ENCODE measurements at regions of chr1 and their contacts with region 1.

Region 1: GRCh38 chr1:224851210-224851847 is 78.1 kb upstream of the DNAH14 start:
- DNase-seq: peak; percentile 55 to 78
- H3K4me3 ChIP-seq: no peak overlapping the region
- H3K27ac ChIP-seq: no peak overlapping the region
- H3K4me1 ChIP-seq: no peaks in the 10 kb centered on the region
- H3K27me3 ChIP-seq: no peaks in the 10 kb centered on the region
- CTCF ChIP-seq: peak; percentile 89

Region 2: DNA sequence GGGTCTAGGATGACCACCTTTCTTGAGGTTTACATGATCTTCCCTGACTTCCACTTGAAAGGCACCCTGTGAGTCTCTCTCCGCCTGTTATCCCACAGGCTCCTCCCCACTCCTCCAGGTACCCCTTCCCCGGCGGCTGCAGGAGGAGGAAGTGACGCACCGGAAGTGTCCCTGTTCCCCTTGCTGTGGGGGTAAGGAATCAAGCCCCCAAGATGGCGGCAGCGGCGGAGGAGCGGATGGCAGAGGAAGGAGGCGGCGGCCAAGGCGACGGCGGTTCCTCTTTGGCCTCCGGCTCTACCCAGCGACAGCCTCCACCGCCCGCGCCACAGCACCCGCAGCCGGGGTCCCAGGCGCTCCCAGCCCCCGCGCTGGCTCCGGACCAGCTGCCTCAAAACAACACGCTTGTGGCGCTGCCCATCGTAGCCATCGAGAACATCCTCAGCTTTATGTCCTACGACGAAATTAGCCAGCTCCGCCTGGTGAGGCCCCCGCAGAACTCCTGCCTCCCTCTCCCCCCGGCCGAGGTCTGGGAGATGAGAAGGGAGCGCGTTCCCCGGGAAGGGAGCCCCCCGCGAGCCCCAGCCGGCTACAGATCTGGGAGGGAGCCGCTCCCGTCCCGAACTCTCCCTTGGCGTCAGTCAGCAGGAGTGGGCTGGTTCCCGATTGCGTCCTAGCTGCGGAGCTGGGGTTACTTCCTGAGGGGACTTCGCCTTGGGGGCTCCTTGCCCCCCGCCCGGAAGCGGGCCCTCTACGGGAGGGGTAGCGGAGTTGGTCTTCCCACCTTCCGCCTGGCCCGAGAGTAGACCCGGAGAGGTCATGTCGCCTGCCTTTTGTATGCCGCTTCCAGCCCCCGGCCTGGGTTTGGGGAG is 737.2 kb before region 1 on chr1 and contains the start of gene FBXO28:
- CTCF ChIA-PET with region 1: no interaction called
- POLR2A ChIA-PET with region 1: no interaction called
- intact Hi-C with region 1: loop called (anchors 1 kb)
- DNase-seq: peak; percentile 86 to 93
- H3K4me3 ChIP-seq: peak within 1 kb of the TSS; percentile 81
- H3K27ac ChIP-seq: peak within 1 kb of the TSS; percentile 45
- H3K4me1 ChIP-seq: peaks cover 24% of the 10 kb centered on the region
- H3K27me3 ChIP-seq: no peaks in the 10 kb centered on the region
- CTCF ChIP-seq: no peak
- total RNA-seq, gene FBXO28: 43.4 and 48.1 TPM in 2 replicates

Region 3: DNA sequence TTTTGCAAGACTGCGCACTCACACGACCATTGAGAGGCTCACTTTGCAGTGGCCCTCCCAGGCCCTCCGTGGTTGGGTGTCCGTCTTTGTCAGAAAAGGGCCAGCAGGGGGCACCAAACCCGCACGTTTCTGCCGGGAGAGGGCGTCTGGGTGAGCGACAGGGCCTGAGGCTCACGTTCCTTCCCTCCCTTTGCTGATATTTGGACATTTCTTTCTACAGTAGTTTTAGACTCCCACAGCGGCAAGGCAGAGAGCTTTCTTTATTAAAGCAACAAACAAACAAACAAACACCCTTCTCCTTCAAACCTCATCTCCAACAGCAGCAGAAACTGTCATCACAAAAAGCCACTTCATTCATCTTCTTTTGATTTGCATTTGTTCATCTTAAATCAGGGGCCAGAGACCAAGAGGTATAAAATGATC is 337.5 kb before region 1 on chr1:
- CTCF ChIA-PET with region 1: interaction called, 6 read pairs
- POLR2A ChIA-PET with region 1: no interaction called
- intact Hi-C with region 1: loop called (anchors 1 kb)
- DNase-seq: peak; percentile 71 to 92
- H3K4me3 ChIP-seq: no peak overlapping the region
- H3K27ac ChIP-seq: no peak overlapping the region
- H3K4me1 ChIP-seq: peaks cover 37% of the 10 kb centered on the region
- H3K27me3 ChIP-seq: no peaks in the 10 kb centered on the region
- CTCF ChIP-seq: peak; percentile 94

Region 4: DNA sequence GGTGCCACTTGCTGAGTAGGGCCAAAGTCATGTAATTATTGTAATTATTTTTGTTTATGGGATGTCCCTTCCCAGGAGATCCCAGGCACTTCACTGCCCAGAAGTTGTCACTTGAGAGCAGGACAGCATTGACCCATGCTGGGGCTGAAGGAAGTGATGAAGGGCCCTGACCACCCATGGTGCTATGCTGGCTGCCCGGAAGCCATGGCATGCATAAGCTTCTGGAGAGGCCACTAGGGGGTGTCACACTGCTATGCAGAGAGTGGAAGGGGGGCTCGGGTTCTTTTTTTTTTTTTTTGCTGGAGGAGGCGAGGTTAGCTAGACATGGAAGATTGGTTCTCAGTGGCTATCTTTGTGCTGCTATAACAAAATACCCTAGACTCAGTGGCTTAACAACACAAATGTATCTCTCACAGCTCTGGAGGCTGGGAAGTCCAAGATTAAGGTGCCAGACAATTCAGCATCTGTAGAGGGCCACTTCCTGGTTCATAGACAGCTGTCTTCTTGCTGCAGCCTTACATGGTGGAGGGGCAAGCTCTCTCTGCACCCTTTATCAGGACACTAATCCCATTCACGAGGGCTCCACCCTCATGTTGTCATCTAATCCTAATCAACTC is 150.3 kb before region 1 on chr1:
- CTCF ChIA-PET with region 1: interaction called, 12 read pairs
- POLR2A ChIA-PET with region 1: no interaction called
- intact Hi-C with region 1: loop called (anchors 2 kb)
- DNase-seq: no peak
- H3K4me3 ChIP-seq: no peak overlapping the region
- H3K27ac ChIP-seq: no peak overlapping the region
- H3K4me1 ChIP-seq: no peaks in the 10 kb centered on the region
- H3K27me3 ChIP-seq: no peaks in the 10 kb centered on the region
- CTCF ChIP-seq: peak; percentile 58

Region 5: DNA sequence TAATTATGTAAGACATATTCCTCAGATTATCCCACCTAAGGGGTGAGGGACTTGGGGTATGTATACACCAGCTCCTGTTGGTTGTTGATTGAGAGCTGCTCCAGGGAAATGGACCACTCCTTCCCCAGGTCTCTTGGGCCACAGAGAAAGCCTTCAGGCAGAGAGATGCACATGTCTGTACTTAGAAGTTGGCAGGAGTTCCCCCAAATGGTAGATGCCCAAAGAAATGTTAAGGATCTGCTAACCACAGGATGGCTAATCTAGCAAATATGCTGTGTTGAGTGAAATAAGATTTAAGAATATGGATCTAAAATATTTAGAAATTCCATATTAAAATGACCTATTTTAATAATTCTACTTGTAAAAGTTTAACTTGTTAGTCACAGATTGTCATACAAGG is 22.6 kb before region 1 on chr1:
- CTCF ChIA-PET with region 1: no interaction called
- POLR2A ChIA-PET with region 1: no interaction called
- intact Hi-C with region 1: no loop called
- DNase-seq: no peak
- H3K4me3 ChIP-seq: no peak overlapping the region
- H3K27ac ChIP-seq: no peak overlapping the region
- H3K4me1 ChIP-seq: peaks cover 22% of the 10 kb centered on the region
- H3K27me3 ChIP-seq: no peaks in the 10 kb centered on the region
- CTCF ChIP-seq: no peak

Region 6: DNA sequence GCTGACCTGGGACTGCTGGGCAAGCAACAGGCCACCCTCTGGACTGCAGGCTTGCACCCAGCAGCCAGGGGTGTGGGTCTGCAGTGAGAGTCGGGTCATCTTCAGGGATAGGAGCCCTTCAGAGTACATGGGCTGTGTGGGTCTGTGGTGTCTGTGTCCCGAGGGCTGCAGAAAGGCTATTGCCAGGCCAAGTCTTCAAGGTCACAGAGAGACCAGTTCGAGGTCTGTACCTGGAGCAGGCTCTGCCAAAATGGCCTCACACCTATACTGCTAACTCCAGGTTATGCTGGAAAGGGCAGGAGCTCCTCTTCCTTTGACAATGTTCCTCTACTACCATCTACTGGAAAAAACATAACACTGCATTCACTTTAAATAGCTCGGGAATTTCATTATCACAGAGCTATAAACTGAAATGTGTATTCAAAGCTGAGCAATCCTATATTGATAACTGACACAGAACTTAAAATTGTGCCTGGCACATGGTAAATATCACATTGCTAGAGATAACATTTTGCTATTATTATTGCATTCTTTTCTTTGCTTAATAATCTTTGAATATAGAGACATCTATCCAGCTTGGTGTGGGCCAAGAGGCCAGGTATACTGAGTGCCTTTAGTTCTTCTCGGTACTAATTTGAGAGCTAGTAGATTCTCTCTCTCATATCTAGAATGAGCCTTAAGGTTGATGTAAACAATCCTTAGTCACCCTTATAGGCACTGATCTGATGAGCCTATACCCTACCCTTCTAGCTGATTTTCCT is 71.3 kb after region 1 on chr1:
- CTCF ChIA-PET with region 1: interaction called, 3 read pairs
- POLR2A ChIA-PET with region 1: no interaction called
- intact Hi-C with region 1: loop called (anchors 5 kb)
- DNase-seq: peak; percentile 16 to 51
- H3K4me3 ChIP-seq: no peak overlapping the region
- H3K27ac ChIP-seq: no peak overlapping the region
- H3K4me1 ChIP-seq: no peaks in the 10 kb centered on the region
- H3K27me3 ChIP-seq: no peaks in the 10 kb centered on the region
- CTCF ChIP-seq: peak; percentile 83